ENCODE measurements at regions of chr18 and their contacts with region 1.

Region 1: DNA sequence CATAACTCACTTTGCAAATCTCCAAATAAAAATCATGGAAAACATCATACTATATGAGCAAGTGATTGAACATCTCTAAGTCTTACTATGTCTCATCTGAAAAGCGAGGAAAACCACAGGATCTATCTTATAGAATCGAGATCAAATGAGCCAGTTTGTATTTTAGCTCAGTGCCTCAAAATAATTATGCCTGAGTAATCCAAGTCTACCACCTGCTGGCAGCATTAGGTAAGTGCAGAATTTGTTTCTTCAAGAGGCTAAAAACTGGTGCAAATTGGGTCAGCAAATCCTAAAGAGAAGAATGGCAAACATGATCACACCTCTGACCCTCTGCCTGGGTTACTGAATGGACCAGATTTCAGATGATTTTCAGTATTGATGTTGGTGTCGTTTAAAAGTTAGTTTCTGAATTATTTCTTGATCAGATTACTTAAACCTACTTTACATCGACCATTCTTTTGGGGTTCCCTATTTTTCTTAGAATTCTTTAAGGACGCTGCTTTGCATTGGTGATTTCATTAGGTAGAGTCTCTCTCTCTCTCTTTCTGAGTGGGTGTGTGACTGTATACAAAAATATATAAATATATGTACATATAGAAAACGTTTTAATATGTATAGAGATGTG is 12.7 kb upstream of the FHOD3 start:
- DNase-seq: peak; percentile 37 to 44
- H3K4me3 ChIP-seq: no peak overlapping the region
- H3K27ac ChIP-seq: no peak overlapping the region
- H3K4me1 ChIP-seq: no peaks in the 10 kb centered on the region
- H3K27me3 ChIP-seq: no peaks in the 10 kb centered on the region
- CTCF ChIP-seq: peak; percentile 81 to 93 (median 88)
- POLR2A ChIP-seq: no peak

Region 2: GRCh38 chr18:35756506-35757117 is 528.2 kb before region 1 on chr18:
- intact Hi-C with region 1: loop called (anchors 10 kb)
- DNase-seq: peak; percentile 35 to 47
- H3K4me3 ChIP-seq: no peak overlapping the region
- H3K27ac ChIP-seq: no peak overlapping the region
- H3K4me1 ChIP-seq: no peaks in the 10 kb centered on the region
- H3K27me3 ChIP-seq: no peaks in the 10 kb centered on the region
- CTCF ChIP-seq: peak; percentile 40 to 79 (median 66)
- POLR2A ChIP-seq: no peak

Region 3: GRCh38 chr18:36015629-36016028 is 269.2 kb before region 1 on chr18:
- intact Hi-C with region 1: loop called (anchors 2 kb)
- DNase-seq: no peak
- H3K4me3 ChIP-seq: no peak overlapping the region
- H3K27ac ChIP-seq: no peak overlapping the region
- H3K4me1 ChIP-seq: peaks cover 0 to 7% of the 10 kb centered on the region in 2 donors
- H3K27me3 ChIP-seq: no peaks in the 10 kb centered on the region
- CTCF ChIP-seq: no peak
- POLR2A ChIP-seq: no peak

Region 4: GRCh38 chr18:36095936-36096519 is 188.8 kb before region 1 on chr18:
- intact Hi-C with region 1: loop called (anchors 5 kb)
- DNase-seq: no peak
- H3K4me3 ChIP-seq: no peak overlapping the region
- H3K27ac ChIP-seq: no peak overlapping the region
- H3K4me1 ChIP-seq: no peaks in the 10 kb centered on the region
- H3K27me3 ChIP-seq: no peaks in the 10 kb centered on the region
- CTCF ChIP-seq: peak in 4 of 6 experiments; percentile 51 to 57 (median 54)
- POLR2A ChIP-seq: no peak